K562 (cell line): ENCODE measurements at regions of chr3 and their contacts with region 1.

Region 1: DNA sequence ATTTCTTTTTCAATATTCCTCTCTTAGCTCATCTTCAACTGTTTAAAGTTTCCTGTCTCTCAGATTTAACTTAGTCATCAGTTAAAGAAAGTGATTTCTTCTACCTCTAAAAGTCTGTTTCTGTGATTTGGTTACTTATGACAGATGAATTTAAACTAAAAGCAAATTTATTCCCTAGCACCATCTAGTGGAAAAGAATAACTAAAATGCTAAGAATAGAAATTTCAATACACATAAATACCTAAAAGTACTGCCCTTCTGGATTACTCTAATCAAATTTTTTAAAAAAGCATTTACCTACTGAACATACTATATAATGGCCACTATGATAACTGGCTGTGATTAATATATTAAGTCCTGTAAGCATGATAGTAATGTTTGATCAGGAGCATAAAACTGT is 14.0 kb upstream of the ZCWPW2 start:
- DNase-seq: no peak
- ATAC-seq: no peak
- H3K4me3 ChIP-seq: no peak overlapping the region
- H3K27ac ChIP-seq: no peak overlapping the region
- H3K4me1 ChIP-seq: no peaks in the 10 kb centered on the region
- H3K27me3 ChIP-seq: no peaks in the 10 kb centered on the region
- CTCF ChIP-seq: peak in 1 of 3 experiments; percentile 16; a peak in 1 of 6 replicates
- EP300 ChIP-seq: no peak
- POLR2A ChIP-seq: no peak
- RAD21 ChIP-seq: no peak

Region 2: GRCh38 chr3:27134165-27134796 is 1200.3 kb before region 1 on chr3:
- CTCF ChIA-PET with region 1: no interaction called
- POLR2A ChIA-PET with region 1: no interaction called
- in situ Hi-C with region 1: no loop called
- intact Hi-C with region 1: loop called (anchors 5 kb)
- DNase-seq: peak; percentile 53 to 70 (median 58)
- ATAC-seq: peak; percentile 84
- H3K4me3 ChIP-seq: no peak overlapping the region
- H3K27ac ChIP-seq: no peak overlapping the region
- H3K4me1 ChIP-seq: no peaks in the 10 kb centered on the region
- H3K27me3 ChIP-seq: no peaks in the 10 kb centered on the region
- CTCF ChIP-seq: peak; percentile 80 to 83 (median 82)
- EP300 ChIP-seq: no peak
- POLR2A ChIP-seq: no peak
- RAD21 ChIP-seq: peak; percentile 67 to 80

Region 3: GRCh38 chr3:27712136-27713077 is 622.1 kb before region 1 on chr3:
- CTCF ChIA-PET with region 1: no interaction called
- POLR2A ChIA-PET with region 1: no interaction called
- in situ Hi-C with region 1: loop called (anchors 10 kb)
- intact Hi-C with region 1: loop called (anchors 2 kb)
- DNase-seq: peak; percentile 57 to 71 (median 66)
- ATAC-seq: peak; percentile 97
- H3K4me3 ChIP-seq: no peak overlapping the region
- H3K27ac ChIP-seq: no peak overlapping the region
- H3K4me1 ChIP-seq: peaks cover 0 to 4% of the 10 kb centered on the region in 2 experiments; a peak in 1 of 5 replicates
- H3K27me3 ChIP-seq: peaks cover 12 to 31% of the 10 kb centered on the region in 2 experiments; a peak in 3 of 5 replicates
- CTCF ChIP-seq: peak; percentile 48 to 64 (median 60)
- EP300 ChIP-seq: no peak
- POLR2A ChIP-seq: no peak
- RAD21 ChIP-seq: peak; percentile 53 to 66